ENCODE measurements at regions of chr14 and their contacts with region 1.

Region 1: GRCh38 chr14:99604283-99604765 is 317 bp upstream of the CCDC85C start:
- DNase-seq: peak; percentile 94
- ATAC-seq: peak; percentile 96

Region 2: DNA sequence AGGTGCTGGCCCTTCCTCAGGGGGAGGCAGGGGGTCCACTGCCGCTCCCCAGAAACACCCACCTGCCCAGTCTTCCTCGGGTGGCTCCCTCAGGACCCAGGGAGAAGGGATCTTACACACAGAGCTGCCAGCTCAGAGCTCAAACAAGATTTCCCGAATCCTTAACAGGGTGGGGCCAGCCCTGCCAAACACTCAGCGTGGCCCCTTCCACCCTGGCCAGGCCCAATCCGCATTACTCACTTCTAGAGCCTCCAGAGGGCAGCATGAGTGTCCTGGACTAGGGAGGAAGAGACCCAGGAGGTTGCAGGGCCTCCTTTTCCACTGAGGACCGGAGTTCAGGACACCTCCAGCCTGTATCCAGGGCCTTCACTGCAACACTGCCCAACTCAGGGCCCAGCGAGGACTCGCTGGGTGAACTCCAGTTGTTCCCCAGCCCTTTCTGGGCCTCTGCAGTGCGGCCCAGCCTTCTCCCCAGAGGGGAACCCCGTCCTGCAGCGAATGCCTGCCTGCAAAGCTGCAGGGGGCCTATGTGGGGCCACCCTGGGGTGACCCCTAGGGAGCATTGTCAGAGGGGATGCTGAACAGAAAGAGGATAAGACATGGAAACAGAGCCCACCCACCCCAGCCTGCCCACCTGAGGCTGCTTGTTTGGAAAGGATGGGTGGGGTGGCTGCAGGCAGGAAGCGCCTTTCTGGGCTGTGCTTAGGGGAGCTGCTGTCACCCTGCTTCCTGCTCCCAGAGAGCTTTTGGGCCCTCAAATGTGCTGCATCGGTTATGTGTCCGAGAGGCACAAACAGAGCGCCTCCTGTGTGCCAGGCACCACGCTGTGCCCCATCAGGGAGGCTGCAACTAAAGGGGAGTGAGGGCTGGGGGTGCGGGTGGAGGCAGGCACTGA is 79.3 kb before region 1 on chr14:
- intact Hi-C with region 1: loop called in 1 of 2 experiments (anchors 5 kb)
- DNase-seq: no peak
- ATAC-seq: peak; percentile 38 to 67

Region 3: GRCh38 chr14:99568567-99569560 is 35.5 kb before region 1 on chr14:
- intact Hi-C with region 1: loop called in 1 of 2 experiments (anchors 5 kb)
- DNase-seq: no peak
- ATAC-seq: peak; percentile 19 to 22